ENCODE measurements at regions of chr12 and their contacts with region 1.

Region 1: GRCh38 chr12:9049520-9050133 is 60.3 kb downstream of the KLRG1 start:
- DNase-seq: peak; percentile 33
- H3K4me3 Mint-ChIP-seq: no peak overlapping the region
- H3K27ac Mint-ChIP-seq: no peak overlapping the region
- H3K4me1 Mint-ChIP-seq: peaks cover 11% of the 10 kb centered on the region
- H3K27me3 Mint-ChIP-seq: no peaks in the 10 kb centered on the region

Region 2: GRCh38 chr12:8662593-8662992 is 387.0 kb before region 1 on chr12 and contains the start of gene MFAP5:
- CTCF ChIA-PET with region 1: interaction called, 18 read pairs
- intact Hi-C with region 1: loop called (anchors 1 kb)
- DNase-seq: no peak
- H3K4me3 Mint-ChIP-seq: no peak within 1 kb of the TSS
- H3K27ac Mint-ChIP-seq: no peak within 1 kb of the TSS
- H3K4me1 Mint-ChIP-seq: no peaks in the 10 kb centered on the region
- H3K27me3 Mint-ChIP-seq: peaks cover 5% of the 10 kb centered on the region
- total RNA-seq, gene MFAP5: not detected

Region 3: GRCh38 chr12:8780389-8780788 is 269.2 kb before region 1 on chr12:
- CTCF ChIA-PET with region 1: no interaction called
- intact Hi-C with region 1: loop called (anchors 1 kb)
- DNase-seq: peak; percentile 6
- H3K4me3 Mint-ChIP-seq: no peak overlapping the region
- H3K27ac Mint-ChIP-seq: no peak overlapping the region
- H3K4me1 Mint-ChIP-seq: no peaks in the 10 kb centered on the region
- H3K27me3 Mint-ChIP-seq: no peaks in the 10 kb centered on the region

Region 4: GRCh38 chr12:8914716-8915526 is 134.7 kb before region 1 on chr12:
- CTCF ChIA-PET with region 1: interaction called, 11 read pairs
- intact Hi-C with region 1: loop called (anchors 1 kb)
- DNase-seq: peak; percentile 61
- H3K4me3 Mint-ChIP-seq: no peak overlapping the region
- H3K27ac Mint-ChIP-seq: no peak overlapping the region
- H3K4me1 Mint-ChIP-seq: peaks cover 15% of the 10 kb centered on the region
- H3K27me3 Mint-ChIP-seq: no peaks in the 10 kb centered on the region

Region 5: GRCh38 chr12:9064201-9064814 is 14.7 kb after region 1 on chr12:
- CTCF ChIA-PET with region 1: interaction called, 12 read pairs
- intact Hi-C with region 1: no loop called
- DNase-seq: peak; percentile 78
- H3K4me3 Mint-ChIP-seq: peak overlapping the region; percentile 69
- H3K27ac Mint-ChIP-seq: no peak overlapping the region
- H3K4me1 Mint-ChIP-seq: peaks cover 7% of the 10 kb centered on the region
- H3K27me3 Mint-ChIP-seq: peaks cover 2% of the 10 kb centered on the region

Region 6: GRCh38 chr12:9856151-9856550 is 806.5 kb after region 1 on chr12:
- CTCF ChIA-PET with region 1: no interaction called
- intact Hi-C with region 1: no loop called
- DNase-seq: no peak
- H3K4me3 Mint-ChIP-seq: no peak overlapping the region
- H3K27ac Mint-ChIP-seq: no peak overlapping the region
- H3K4me1 Mint-ChIP-seq: peaks cover 40% of the 10 kb centered on the region
- H3K27me3 Mint-ChIP-seq: no peaks in the 10 kb centered on the region